ENCODE measurements at regions of chr1 and their contacts with region 1.

Region 1: DNA sequence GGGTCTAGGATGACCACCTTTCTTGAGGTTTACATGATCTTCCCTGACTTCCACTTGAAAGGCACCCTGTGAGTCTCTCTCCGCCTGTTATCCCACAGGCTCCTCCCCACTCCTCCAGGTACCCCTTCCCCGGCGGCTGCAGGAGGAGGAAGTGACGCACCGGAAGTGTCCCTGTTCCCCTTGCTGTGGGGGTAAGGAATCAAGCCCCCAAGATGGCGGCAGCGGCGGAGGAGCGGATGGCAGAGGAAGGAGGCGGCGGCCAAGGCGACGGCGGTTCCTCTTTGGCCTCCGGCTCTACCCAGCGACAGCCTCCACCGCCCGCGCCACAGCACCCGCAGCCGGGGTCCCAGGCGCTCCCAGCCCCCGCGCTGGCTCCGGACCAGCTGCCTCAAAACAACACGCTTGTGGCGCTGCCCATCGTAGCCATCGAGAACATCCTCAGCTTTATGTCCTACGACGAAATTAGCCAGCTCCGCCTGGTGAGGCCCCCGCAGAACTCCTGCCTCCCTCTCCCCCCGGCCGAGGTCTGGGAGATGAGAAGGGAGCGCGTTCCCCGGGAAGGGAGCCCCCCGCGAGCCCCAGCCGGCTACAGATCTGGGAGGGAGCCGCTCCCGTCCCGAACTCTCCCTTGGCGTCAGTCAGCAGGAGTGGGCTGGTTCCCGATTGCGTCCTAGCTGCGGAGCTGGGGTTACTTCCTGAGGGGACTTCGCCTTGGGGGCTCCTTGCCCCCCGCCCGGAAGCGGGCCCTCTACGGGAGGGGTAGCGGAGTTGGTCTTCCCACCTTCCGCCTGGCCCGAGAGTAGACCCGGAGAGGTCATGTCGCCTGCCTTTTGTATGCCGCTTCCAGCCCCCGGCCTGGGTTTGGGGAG is at the start of gene FBXO28:
- DNase-seq: peak; percentile 98
- H3K4me3 Mint-ChIP-seq: peak within 1 kb of the TSS; percentile 88
- H3K27ac Mint-ChIP-seq: peak within 1 kb of the TSS; percentile 84
- H3K4me1 Mint-ChIP-seq: peaks cover 23% of the 10 kb centered on the region
- H3K27me3 Mint-ChIP-seq: peaks cover 15% of the 10 kb centered on the region
- total RNA-seq, gene FBXO28: 26.0 and 26.3 TPM in 2 replicates

Region 2: DNA sequence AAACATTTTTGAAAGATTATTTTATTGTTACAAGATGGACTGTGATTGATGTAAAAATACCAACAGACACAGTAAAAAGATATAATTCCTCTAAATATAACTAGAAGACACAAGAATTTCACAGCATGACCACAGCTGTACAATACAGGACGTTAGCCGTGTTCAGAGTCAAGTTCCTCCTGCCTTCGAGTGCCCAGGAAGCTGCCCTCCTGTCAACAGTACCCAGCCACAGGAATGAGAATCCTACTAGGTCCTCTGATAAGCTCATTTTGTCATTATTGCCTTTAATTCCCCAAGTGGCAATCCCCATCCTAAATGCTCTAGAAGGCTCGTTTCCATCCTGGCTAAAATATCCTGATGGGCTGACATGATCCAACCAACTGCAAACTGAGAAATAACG is 418.2 kb before region 1 on chr1:
- intact Hi-C with region 1: loop called (anchors 5 kb)
- DNase-seq: no peak
- H3K4me3 Mint-ChIP-seq: no peak overlapping the region
- H3K27ac Mint-ChIP-seq: no peak overlapping the region
- H3K4me1 Mint-ChIP-seq: peaks cover 20% of the 10 kb centered on the region
- H3K27me3 Mint-ChIP-seq: peaks cover 7% of the 10 kb centered on the region

Region 3: DNA sequence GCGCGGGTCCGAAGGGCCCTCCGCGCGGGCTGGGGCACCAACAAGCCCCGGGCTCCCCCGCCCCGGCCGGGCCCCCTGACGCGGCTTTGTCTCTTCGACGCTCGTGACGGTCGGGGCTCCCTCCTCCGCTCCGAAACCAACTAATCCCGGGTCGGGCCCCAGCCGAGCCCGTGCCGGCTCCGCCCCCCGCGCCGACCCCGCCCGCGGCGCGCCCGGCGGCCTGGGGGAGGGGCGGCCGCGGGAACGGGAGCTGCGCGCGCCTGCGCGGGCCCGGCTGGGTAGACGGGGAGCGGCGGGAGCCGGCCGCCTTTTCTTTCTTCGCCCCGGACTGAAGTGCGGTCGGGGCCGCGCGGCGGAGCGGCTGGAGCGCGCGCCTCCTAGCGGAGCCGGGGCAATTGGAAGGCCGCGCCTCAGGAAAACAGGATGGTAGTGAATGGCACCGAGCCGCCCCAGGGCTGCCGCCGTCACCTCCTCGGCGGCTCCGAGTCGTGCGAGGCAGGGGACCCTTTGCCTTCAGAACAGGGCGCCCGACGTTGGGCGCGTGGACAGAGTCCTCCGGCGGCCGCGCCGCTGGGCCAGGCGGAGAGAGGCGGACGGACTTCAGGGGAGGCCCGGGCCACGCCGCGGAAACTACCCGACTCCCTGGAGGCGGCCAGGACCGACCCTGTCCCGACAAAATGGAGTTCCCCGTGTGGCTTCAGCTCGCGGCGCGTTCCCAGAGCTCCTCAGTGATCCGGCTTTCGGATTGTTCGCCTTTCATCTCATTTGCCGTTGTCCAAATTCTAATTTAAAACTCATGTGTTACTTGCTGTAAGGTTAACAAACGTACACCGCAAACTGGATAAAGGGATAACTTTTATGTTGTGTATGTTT is 268.1 kb before region 1 on chr1 and contains the start of gene TP53BP2:
- intact Hi-C with region 1: loop called (anchors 5 kb)
- DNase-seq: peak; percentile 96
- H3K4me3 Mint-ChIP-seq: peak within 1 kb of the TSS; percentile 91
- H3K27ac Mint-ChIP-seq: peak within 1 kb of the TSS; percentile 97
- H3K4me1 Mint-ChIP-seq: peaks cover 31% of the 10 kb centered on the region
- H3K27me3 Mint-ChIP-seq: peaks cover 5% of the 10 kb centered on the region
- total RNA-seq, gene TP53BP2: 37.1 and 47.7 TPM in 2 replicates

Region 4: GRCh38 chr1:224132901-224133300 is 18.7 kb after region 1 on chr1:
- intact Hi-C with region 1: no loop called
- DNase-seq: no peak
- H3K4me3 Mint-ChIP-seq: no peak overlapping the region
- H3K27ac Mint-ChIP-seq: no peak overlapping the region
- H3K4me1 Mint-ChIP-seq: no peaks in the 10 kb centered on the region
- H3K27me3 Mint-ChIP-seq: no peaks in the 10 kb centered on the region

Region 5: GRCh38 chr1:224149713-224150112 is 35.6 kb after region 1 on chr1:
- intact Hi-C with region 1: no loop called
- DNase-seq: no peak
- H3K4me3 Mint-ChIP-seq: no peak overlapping the region
- H3K27ac Mint-ChIP-seq: no peak overlapping the region
- H3K4me1 Mint-ChIP-seq: peaks cover 13% of the 10 kb centered on the region
- H3K27me3 Mint-ChIP-seq: no peaks in the 10 kb centered on the region

Region 6: DNA sequence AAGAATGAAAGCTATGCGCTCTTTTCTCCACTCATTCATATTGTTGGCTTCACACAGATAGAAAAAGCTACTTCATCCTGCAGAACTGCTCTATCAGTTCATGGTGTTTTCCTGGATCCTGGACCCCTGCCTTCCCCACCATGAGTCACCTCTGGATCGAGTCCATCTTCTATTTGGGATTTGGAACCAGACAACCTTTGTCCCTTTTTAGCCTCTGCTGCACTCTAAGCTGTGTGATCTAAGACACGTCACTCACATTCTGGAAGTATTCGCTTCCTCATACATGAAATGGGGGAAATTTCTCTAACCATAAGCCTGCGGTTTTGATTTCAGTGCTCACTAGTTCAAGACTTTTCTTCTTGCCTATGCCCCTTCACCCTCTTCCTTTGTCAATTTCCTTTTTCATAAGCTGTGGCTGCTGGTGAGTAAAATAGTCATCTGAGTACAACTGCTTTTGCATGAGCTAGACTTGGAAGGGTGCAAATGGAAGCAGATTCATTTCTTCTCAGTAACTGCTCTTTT is 54.8 kb after region 1 on chr1:
- intact Hi-C with region 1: loop called (anchors 5 kb)
- DNase-seq: peak; percentile 87
- H3K4me3 Mint-ChIP-seq: peak overlapping the region; percentile 68
- H3K27ac Mint-ChIP-seq: peak overlapping the region; percentile 90
- H3K4me1 Mint-ChIP-seq: peaks cover 37% of the 10 kb centered on the region
- H3K27me3 Mint-ChIP-seq: peaks cover 3% of the 10 kb centered on the region

Region 7: GRCh38 chr1:224182866-224183590 is 68.9 kb after region 1 on chr1 and contains the start of gene DEGS1:
- intact Hi-C with region 1: loop called (anchors 1 kb)
- DNase-seq: peak; percentile 95
- H3K4me3 Mint-ChIP-seq: peak within 1 kb of the TSS; percentile 96
- H3K27ac Mint-ChIP-seq: peak within 1 kb of the TSS; percentile 97
- H3K4me1 Mint-ChIP-seq: peaks cover 45% of the 10 kb centered on the region
- H3K27me3 Mint-ChIP-seq: peaks cover 3% of the 10 kb centered on the region
- total RNA-seq, gene DEGS1: 51.8 and 56.3 TPM in 2 replicates

Region 8: GRCh38 chr1:224457782-224458144 is 343.6 kb after region 1 on chr1:
- intact Hi-C with region 1: loop called (anchors 1 kb)
- DNase-seq: no peak
- H3K4me3 Mint-ChIP-seq: peak overlapping the region; percentile 59
- H3K27ac Mint-ChIP-seq: no peak overlapping the region
- H3K4me1 Mint-ChIP-seq: peaks cover 27% of the 10 kb centered on the region
- H3K27me3 Mint-ChIP-seq: no peaks in the 10 kb centered on the region